PC-9 (cell line): ENCODE measurements at regions of chr5 and their contacts with region 1.

Region 1: GRCh38 chr5:142748568-142749249 is 21.5 kb upstream of the ARHGAP26 start:
- DNase-seq: no peak
- H3K4me3 ChIP-seq: no peak overlapping the region
- H3K27ac ChIP-seq: no peak overlapping the region
- H3K4me1 ChIP-seq: peaks cover 36% of the 10 kb centered on the region
- H3K27me3 ChIP-seq: no peaks in the 10 kb centered on the region
- CTCF ChIP-seq: peak; percentile 59

Region 2: GRCh38 chr5:142627383-142628255 is 121.1 kb before region 1 on chr5:
- CTCF ChIA-PET with region 1: no interaction called
- POLR2A ChIA-PET with region 1: interaction called, 18 read pairs
- intact Hi-C with region 1: no loop called
- DNase-seq: no peak
- H3K4me3 ChIP-seq: no peak overlapping the region
- H3K27ac ChIP-seq: no peak overlapping the region
- H3K4me1 ChIP-seq: no peaks in the 10 kb centered on the region
- H3K27me3 ChIP-seq: no peaks in the 10 kb centered on the region
- CTCF ChIP-seq: no peak

Region 3: DNA sequence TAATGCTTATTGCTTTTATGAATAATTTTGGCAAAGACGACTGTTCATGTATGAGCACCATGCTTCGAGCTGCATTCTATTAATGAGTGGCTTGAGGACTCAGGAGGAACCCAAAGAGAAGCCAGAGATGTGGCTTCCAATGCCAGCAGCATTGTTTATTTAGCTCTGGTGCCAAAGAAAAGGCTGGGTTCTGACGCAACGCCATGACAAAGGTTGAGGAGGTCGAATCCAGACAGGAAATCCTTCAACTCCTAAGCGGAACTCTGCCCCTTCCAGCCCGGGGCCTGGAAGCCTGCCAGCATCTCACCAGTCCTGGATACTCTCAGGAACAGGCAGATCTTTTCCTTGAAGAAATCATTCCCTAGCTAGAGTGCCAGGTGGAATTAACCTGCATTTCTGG is 125.8 kb after region 1 on chr5:
- CTCF ChIA-PET with region 1: interaction called, 3 read pairs
- POLR2A ChIA-PET with region 1: no interaction called
- intact Hi-C with region 1: loop called (anchors 10 kb)
- DNase-seq: peak; percentile 68 to 76
- H3K4me3 ChIP-seq: no peak overlapping the region
- H3K27ac ChIP-seq: peak overlapping the region; percentile 78
- H3K4me1 ChIP-seq: peaks cover 48% of the 10 kb centered on the region
- H3K27me3 ChIP-seq: no peaks in the 10 kb centered on the region
- CTCF ChIP-seq: no peak